ENCODE measurements at regions of chr12 and their contacts with region 1.

Region 1: GRCh38 chr12:15220994-15221885 is at the start of gene RERG:
- DNase-seq: peak; percentile 6
- H3K4me3 ChIP-seq: peak within 1 kb of the TSS; percentile 19 to 76 (median 54)
- H3K27ac ChIP-seq: peak within 1 kb of the TSS; percentile 50 to 90 (median 86)
- H3K4me1 ChIP-seq: peaks cover 0 to 24% (median 5%) of the 10 kb centered on the region in 3 donors
- H3K27me3 ChIP-seq: peaks cover 0 to 8% (median 0%) of the 10 kb centered on the region in 4 donors
- CTCF ChIP-seq: peak; percentile 77 to 95 (median 94)
- POLR2A ChIP-seq: peak in 2 of 4 donors; percentile 28 to 43
- total RNA-seq, gene RERG: 1.4 to 15.1 (median 7.0) TPM

Region 2: DNA sequence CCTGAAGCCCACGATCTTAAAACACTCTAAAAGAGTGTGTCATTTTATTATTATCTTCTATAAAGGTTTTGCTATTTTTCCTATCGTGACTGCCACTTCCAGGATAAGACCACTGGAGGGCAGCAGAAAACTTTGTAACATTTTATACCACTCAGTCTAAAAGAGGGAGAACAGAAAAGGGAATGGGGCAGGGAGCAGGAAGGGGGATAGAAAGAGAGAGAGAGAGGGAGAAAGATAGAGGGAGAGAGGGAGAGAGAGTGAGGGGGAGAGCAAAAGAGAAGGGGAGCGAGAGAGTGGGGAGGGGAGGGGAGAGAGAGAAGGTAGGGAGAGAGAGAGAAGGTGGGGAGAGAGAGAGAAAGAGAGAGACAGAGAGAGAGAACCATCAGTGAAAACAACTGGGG is 375.9 kb before region 1 on chr12:
- intact Hi-C with region 1: loop called (anchors 5 kb)
- DNase-seq: no peak
- H3K4me3 ChIP-seq: no peak overlapping the region
- H3K27ac ChIP-seq: peak overlapping the region in 1 of 4 donors; percentile 1
- H3K4me1 ChIP-seq: peaks cover 0 to 46% (median 29%) of the 10 kb centered on the region in 3 donors
- H3K27me3 ChIP-seq: no peaks in the 10 kb centered on the region
- CTCF ChIP-seq: peak; percentile 52 to 87 (median 78)
- POLR2A ChIP-seq: no peak

Region 3: GRCh38 chr12:15151161-15152120 is 69.8 kb before region 1 on chr12:
- intact Hi-C with region 1: loop called (anchors 2 kb)
- DNase-seq: no peak
- H3K4me3 ChIP-seq: no peak overlapping the region
- H3K27ac ChIP-seq: peak overlapping the region; percentile 18 to 68 (median 53)
- H3K4me1 ChIP-seq: peaks cover 0 to 77% (median 31%) of the 10 kb centered on the region in 3 donors
- H3K27me3 ChIP-seq: no peaks in the 10 kb centered on the region
- CTCF ChIP-seq: peak in 5 of 6 experiments; percentile 35 to 64 (median 56)
- POLR2A ChIP-seq: no peak

Region 4: GRCh38 chr12:15276088-15276698 is 55.0 kb after region 1 on chr12:
- intact Hi-C with region 1: loop called (anchors 10 kb)
- DNase-seq: no peak
- H3K4me3 ChIP-seq: no peak overlapping the region
- H3K27ac ChIP-seq: no peak overlapping the region
- H3K4me1 ChIP-seq: peaks cover 3 to 55% (median 18%) of the 10 kb centered on the region in 3 donors
- H3K27me3 ChIP-seq: no peaks in the 10 kb centered on the region
- CTCF ChIP-seq: peak; percentile 46 to 79 (median 69)
- POLR2A ChIP-seq: no peak

Region 5: GRCh38 chr12:16037533-16037932 is 816.3 kb after region 1 on chr12:
- intact Hi-C with region 1: no loop called
- DNase-seq: no peak
- H3K4me3 ChIP-seq: no peak overlapping the region
- H3K27ac ChIP-seq: no peak overlapping the region
- H3K4me1 ChIP-seq: no peaks in the 10 kb centered on the region
- H3K27me3 ChIP-seq: no peaks in the 10 kb centered on the region
- CTCF ChIP-seq: no peak
- POLR2A ChIP-seq: no peak

Measured in esophagus squamous epithelium (tissue), 5 donors.